Activated B cell treated with CpG ODN at 0.5 μM for 24 hours (primary cell): ENCODE measurements at regions of chr4 and their contacts with region 1.

Region 1: GRCh38 chr4:87058356-87059073 is 123.7 kb downstream of the AFF1 start:
- DNase-seq: no peak
- ATAC-seq: peak; percentile 42
- H3K4me3 Mint-ChIP-seq: no peak overlapping the region
- H3K27ac Mint-ChIP-seq: peak overlapping the region; percentile 28
- H3K4me1 Mint-ChIP-seq: peaks cover 53% of the 10 kb centered on the region
- H3K27me3 Mint-ChIP-seq: no peaks in the 10 kb centered on the region
- CTCF ChIP-seq: no peak

Region 2: DNA sequence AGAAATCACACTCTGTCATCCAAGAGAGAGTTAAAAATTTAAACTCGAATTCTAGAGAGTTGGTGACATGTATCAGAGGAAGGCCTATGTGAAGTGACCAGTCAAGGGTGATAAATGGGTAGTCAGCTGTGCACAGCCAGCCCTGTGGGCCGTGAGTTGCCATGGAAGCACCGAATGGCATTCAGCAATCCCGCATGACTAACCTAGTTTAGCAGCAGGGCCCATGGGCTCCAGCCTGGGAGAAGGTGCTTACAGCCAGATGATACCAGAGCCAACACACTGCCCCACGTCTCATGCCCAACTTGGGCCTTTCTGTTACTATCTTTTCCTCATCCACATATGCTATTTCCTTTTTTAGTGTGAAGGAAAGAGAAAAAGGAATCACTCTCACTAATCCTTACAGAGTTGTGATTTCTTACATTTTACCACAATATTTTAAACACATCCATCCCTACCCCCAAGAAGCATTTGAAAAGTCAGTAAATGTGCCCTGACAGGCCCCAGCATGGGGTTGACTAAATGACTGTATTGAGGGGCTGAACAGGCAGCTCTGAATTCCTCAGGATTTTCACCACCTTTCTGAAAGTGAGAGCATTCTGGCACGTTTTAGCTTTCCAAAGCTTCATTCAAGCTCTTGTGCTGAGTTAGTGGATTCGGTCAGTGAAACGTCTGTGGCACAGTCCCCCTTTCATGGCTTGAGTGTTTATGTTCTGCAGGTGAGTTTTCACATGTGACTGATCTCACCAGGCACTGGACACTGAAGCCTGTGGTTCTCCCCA is 19.5 kb before region 1 on chr4:
- CTCF ChIA-PET with region 1: no interaction called
- POLR2A ChIA-PET with region 1: no interaction called
- intact Hi-C with region 1: loop called (anchors 2 kb)
- DNase-seq: no peak
- ATAC-seq: peak; percentile 83
- H3K4me3 Mint-ChIP-seq: peak overlapping the region; percentile 22
- H3K27ac Mint-ChIP-seq: peak overlapping the region; percentile 14
- H3K4me1 Mint-ChIP-seq: peaks cover 80% of the 10 kb centered on the region
- H3K27me3 Mint-ChIP-seq: no peaks in the 10 kb centered on the region
- CTCF ChIP-seq: no peak

Region 3: DNA sequence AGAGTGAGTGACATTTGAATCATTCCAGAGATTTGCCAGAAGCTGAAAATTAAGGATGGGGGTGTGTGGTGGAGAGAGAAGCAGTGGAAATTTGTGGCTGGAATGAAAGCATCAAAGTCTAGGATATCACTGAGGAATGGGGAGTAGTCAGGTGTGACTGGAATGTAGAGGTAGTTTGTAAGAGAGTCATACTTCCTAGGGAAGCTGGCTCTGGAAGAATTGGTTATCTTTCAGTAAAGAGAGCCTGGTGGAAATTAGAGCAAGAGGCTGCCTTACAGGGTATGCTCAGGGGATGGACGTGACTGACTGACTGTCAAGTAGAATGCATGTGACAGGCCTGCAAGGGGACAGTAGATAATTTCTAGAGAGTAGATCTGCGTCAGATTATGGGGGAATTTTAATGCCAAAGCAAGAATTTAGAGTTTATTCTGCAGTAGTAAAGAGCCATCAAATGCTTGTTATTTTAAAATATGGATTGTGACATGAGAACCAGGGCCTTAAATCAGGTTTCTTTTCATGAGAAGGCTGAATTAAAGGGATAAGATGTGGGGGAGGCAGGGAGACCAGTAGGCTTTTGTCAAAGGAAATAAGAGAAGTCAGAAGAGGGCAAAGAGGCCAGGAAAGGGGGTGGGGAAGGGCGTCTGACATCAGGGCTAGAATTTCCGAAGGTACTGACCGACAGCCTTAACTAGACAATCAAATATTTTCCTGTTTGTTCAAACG is 13.8 kb before region 1 on chr4:
- CTCF ChIA-PET with region 1: interaction called, 3 read pairs
- POLR2A ChIA-PET with region 1: no interaction called
- intact Hi-C with region 1: loop called (anchors 2 kb)
- DNase-seq: no peak
- ATAC-seq: no peak
- H3K4me3 Mint-ChIP-seq: no peak overlapping the region
- H3K27ac Mint-ChIP-seq: no peak overlapping the region
- H3K4me1 Mint-ChIP-seq: peaks cover 41% of the 10 kb centered on the region
- H3K27me3 Mint-ChIP-seq: no peaks in the 10 kb centered on the region
- CTCF ChIP-seq: no peak